Activated CD4-positive, alpha-beta T cell treated with anti-CD3 and anti-CD28 coated beads, Interleukin-2, amount 10 ng/mL, durations not matched to agents 7 days and 5 days (primary cell): ENCODE measurements at regions of chr6 and their contacts with region 1.

Region 1: DNA sequence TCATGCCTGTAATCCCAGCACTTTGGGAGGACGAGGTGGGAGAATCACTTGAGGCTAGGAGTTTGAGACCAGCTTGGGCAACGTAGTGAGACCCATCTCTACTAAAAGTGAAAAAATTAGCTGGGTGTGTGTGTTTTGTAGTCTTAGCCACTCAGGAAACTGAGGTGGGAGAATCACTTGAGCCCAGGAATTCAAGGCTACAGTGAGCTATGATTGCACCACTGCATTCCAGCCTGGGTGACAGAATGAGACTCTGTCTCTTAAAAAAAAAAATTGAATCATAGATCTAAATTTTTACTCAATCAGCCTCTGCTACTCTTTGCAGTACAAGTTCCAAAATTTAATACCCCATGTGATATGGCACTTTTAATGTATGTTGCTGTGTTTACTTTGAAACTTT is 121.6 kb downstream of the ARMC2 start:
- DNase-seq: no peak
- H3K4me3 Mint-ChIP-seq: no peak overlapping the region
- H3K27ac Mint-ChIP-seq: no peak overlapping the region
- H3K4me1 Mint-ChIP-seq: peaks cover 12% of the 10 kb centered on the region
- H3K27me3 Mint-ChIP-seq: no peaks in the 10 kb centered on the region

Region 2: GRCh38 chr6:109013656-109014305 is 44.0 kb after region 1 on chr6:
- CTCF ChIA-PET with region 1: no interaction called
- POLR2A ChIA-PET with region 1: interaction called, 12 read pairs
- DNase-seq: no peak
- H3K4me3 Mint-ChIP-seq: no peak overlapping the region
- H3K27ac Mint-ChIP-seq: no peak overlapping the region
- H3K4me1 Mint-ChIP-seq: peaks cover 24% of the 10 kb centered on the region
- H3K27me3 Mint-ChIP-seq: no peaks in the 10 kb centered on the region